Sigmoid colon (tissue), 7 donors: ENCODE measurements at regions of chr20 and their contacts with region 1.

Region 1: DNA sequence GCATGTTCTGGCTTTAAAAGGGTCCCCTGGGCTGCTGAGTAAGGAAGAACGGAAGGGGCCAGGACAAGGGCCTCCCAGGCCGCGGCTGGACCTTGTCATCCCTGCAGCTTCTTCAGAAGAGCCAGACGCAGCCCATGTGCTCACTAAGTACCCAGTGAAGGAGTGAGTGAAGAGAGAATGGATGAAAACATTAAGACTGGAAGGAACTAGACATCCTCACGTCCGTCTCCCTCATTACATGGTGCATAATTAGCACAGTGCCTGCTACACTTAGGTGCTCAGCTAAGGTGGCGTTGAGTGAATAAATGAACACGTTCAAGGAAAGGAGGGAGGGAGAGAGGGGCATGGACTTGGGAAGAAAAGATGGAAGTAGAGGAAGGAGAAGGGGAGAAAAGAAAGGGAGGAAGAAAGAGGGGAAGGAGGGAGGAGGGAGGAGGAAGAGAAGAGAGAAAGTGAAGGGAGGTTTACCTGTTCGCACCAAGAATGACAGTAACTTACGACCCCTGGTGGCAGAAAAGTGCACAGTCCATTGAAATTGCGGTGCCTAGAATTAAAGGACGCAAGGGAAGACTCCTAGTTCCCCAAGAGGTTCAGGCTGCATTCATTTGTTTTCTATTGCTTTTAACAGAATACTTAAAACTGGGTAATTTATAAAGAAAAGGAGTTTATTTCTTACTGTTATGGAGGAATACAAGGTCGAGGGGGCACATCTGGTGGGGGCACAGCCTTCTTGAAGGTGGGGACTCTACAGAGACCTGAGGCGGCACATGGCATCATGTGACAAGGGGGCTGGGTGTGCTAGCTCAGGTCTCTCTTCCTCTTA is 8.0 kb downstream of the TP53RK start:
- DNase-seq: no peak
- H3K4me3 ChIP-seq: no peak overlapping the region
- H3K27ac ChIP-seq: no peak overlapping the region
- H3K4me1 ChIP-seq: peaks cover 0 to 34% (median 22%) of the 10 kb centered on the region in 4 donors
- H3K27me3 ChIP-seq: no peaks in the 10 kb centered on the region
- CTCF ChIP-seq: peak; percentile 48 to 79 (median 68)
- EP300 ChIP-seq: no peak
- POLR2A ChIP-seq: no peak

Region 2: GRCh38 chr20:46562373-46563169 is 118.7 kb before region 1 on chr20:
- intact Hi-C with region 1: loop called (anchors 5 kb)
- DNase-seq: peak; percentile 85
- H3K4me3 ChIP-seq: peak overlapping the region in 3 of 4 donors; percentile 21 to 39 (median 29)
- H3K27ac ChIP-seq: peak overlapping the region in 3 of 4 donors; percentile 48 to 70 (median 67)
- H3K4me1 ChIP-seq: peaks cover 0 to 12% (median 8%) of the 10 kb centered on the region in 4 donors
- H3K27me3 ChIP-seq: no peaks in the 10 kb centered on the region
- CTCF ChIP-seq: peak; percentile 36 to 92 (median 79)
- EP300 ChIP-seq: no peak
- POLR2A ChIP-seq: no peak

Region 3: DNA sequence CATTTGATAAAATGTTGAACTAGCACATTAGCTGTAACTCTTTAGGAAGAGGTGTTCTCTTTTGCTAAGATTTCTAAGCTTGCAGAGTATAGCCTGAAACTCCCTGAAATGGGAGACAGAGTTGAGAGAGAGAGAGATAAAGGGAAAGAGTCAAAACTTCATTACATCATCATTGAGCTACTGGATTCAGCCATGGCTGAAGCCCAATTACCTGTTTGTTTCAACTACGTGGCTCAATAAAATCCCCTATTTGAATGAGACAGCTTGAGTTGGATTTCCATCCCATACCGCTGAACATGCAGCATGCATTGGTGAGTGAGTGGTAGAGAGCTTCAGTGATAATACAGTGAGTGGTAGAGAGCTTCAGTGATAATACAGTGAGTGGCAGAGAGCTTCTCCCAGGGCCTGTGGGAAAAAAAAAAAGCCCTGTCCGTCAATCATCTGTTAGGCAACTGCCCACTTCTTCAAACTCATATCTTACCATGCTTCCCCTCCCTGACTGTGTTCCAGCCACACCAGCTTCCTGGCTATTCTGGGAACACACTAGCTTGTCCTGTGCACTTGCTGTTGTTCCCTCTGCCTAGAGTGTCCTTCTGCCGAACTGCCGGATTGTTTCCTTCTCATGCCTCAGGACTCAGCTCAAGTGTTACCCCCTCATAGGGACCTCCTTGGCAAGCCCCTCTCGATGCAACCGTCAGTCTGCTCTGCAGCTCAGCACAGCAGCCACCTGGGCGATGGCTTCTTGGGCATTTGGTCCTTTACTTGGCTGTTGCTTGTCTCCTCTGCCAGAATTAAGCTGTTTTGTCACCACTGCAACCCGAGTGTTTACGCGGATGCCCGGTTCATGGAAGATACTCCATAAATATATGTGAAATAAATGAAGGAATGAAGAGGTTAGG is 122.1 kb after region 1 on chr20:
- intact Hi-C with region 1: no loop called
- DNase-seq: no peak
- H3K4me3 ChIP-seq: no peak overlapping the region
- H3K27ac ChIP-seq: no peak overlapping the region
- H3K4me1 ChIP-seq: no peaks in the 10 kb centered on the region
- H3K27me3 ChIP-seq: peaks cover 0 to 14% (median 0%) of the 10 kb centered on the region in 3 donors
- CTCF ChIP-seq: no peak
- EP300 ChIP-seq: no peak
- POLR2A ChIP-seq: no peak